Activated CD4-positive, alpha-beta T cell treated with anti-CD3 and anti-CD28 coated beads, Interleukin-2, amount 10 ng/mL, durations not matched to agents 24 days and 14 days (primary cell): ENCODE measurements at regions of chr1 and their contacts with region 1.

Region 1: DNA sequence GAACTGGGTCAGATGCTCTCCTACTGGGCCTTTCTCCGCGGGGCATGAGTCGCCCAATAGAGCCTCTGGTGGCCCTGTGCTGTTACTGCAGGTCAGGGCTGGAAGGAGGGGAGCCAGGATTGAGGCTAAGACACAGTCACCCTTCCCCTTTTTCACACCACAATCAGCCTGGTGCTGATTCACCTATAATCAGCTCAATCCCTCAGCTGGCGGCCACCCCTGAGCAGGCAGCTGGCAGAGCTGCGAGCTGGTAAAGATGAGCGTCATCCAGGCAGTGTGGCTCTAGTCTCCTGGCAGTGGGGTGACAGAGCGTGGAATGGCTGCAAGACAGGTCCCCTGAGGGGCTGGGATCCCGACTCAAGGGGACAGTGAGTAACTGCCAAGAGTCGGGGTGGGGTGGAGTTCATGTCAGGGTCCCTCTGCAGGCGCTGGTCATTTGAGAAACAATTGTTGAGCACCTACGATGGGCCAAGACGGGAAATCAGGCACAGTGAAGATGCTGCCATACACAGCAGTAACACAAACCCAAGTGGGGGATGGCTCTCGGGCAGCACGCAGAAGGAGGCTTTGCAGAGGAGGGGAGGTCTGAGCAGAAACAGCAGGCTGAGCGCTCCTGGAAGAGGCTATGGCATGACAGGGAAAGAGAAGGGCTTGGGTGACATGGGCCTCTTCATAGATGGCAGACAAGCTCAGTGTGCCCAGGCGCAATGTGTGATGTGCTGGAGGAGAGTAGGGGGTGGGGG is 21.8 kb downstream of the ATF3 start:
- DNase-seq: peak; percentile 88
- H3K4me3 Mint-ChIP-seq: no peak overlapping the region
- H3K27ac Mint-ChIP-seq: no peak overlapping the region
- H3K4me1 Mint-ChIP-seq: peaks cover 6% of the 10 kb centered on the region
- H3K27me3 Mint-ChIP-seq: peaks cover 10% of the 10 kb centered on the region

Region 2: DNA sequence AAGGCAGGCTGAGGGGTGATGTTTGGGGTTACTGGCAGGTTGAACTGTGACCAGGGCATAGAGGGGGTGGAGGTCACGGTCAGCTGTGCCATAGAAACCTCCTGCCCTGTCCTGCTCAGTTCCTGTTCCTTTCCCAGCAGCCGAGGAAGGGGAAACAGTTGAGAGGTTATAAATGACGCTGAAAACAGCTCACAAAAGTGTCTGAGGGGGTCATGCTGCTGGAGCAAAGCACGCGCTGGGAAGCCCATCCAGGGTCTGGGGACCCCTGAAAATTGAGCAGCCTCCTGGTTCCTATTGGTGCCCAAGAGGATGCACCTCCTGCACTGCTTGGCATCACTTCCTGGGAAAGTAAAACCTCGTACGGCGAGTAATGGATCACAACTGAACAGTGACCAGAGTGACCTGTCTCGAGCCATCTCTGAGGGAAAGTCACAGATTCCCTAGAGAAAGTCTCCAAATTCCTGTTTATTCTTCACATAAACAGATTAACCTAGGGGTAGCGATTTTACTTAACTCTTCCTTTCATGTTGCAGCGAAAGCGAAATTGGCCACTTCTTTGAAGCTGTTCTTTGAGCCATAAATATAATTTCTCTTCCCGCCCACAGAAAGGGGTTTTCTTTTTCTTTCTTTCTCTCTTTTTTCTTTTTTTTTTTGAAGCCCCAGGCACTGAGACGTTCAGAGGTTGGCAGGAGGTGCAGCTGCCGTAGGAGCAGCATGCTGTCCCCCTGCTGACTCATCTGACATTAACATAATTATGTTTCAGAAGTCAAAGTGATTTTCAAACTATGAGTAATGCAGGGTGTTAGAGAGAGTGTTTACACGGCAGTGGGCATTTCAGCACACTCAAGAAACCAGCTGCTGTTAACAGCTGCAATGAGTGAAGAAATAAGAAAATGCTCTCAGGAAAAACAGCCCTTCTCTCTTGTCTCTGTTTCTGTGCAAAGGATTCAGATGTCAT is 63.5 kb before region 1 on chr1:
- intact Hi-C with region 1: loop called (anchors 2 kb)
- DNase-seq: peak; percentile 86
- H3K4me3 Mint-ChIP-seq: peak overlapping the region; percentile 81
- H3K27ac Mint-ChIP-seq: peak overlapping the region; percentile 89
- H3K4me1 Mint-ChIP-seq: peaks cover 27% of the 10 kb centered on the region
- H3K27me3 Mint-ChIP-seq: peaks cover 35% of the 10 kb centered on the region

Region 3: DNA sequence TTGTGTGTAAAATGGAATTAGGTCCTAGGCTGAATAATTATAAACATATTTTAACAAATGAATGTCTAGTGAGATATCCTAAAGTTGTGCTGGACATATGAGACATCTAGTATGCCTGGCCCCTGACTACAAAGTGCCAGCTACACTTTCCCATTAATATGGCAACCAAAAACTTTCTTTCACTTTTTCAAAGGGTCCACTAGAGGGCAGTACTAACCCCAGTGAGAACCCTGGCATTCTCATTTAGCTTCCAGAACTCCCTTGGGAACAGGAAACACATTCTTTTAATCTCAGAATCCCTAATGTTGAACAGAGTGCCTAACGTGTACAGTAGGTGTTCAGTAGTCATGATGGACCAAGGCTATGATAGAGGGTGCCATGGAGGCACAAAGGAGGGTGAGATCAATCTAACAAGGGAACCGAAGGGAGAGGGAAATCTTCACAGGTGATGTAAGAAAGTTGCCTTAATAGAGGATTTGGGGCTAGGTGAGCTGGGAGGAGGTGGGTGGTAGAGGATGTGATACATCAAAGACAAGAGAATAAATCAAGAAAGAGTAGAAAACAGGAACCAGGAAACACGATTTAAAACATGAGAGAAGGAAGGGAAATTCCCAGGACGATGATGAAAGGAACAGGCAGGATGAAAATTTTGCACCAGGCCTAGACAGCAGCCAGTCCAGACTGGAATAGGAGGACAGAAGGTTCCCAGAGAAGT is 119.6 kb after region 1 on chr1:
- intact Hi-C with region 1: no loop called
- DNase-seq: no peak
- H3K4me3 Mint-ChIP-seq: peak overlapping the region; percentile 22
- H3K27ac Mint-ChIP-seq: peak overlapping the region; percentile 1
- H3K4me1 Mint-ChIP-seq: peaks cover 39% of the 10 kb centered on the region
- H3K27me3 Mint-ChIP-seq: no peaks in the 10 kb centered on the region